ENCODE measurements at regions of chr11 and their contacts with region 1.

Region 1: GRCh38 chr11:1515082-1516060 is 28.8 kb upstream of the MOB2 start:
- DNase-seq: peak; percentile 49 to 99
- H3K4me3 ChIP-seq: no peak overlapping the region
- H3K27ac ChIP-seq: no peak overlapping the region
- H3K4me1 ChIP-seq: peaks cover 0 to 9% (median 8%) of the 10 kb centered on the region in 4 experiments; a peak in 6 of 7 replicates
- H3K27me3 ChIP-seq: no peaks in the 10 kb centered on the region
- CTCF ChIP-seq: peak; percentile 91 to 98 (median 92)
- EP300 ChIP-seq: no peak
- POLR2A ChIP-seq: no peak
- RAD21 ChIP-seq: peak; percentile 91 to 92

Region 2: DNA sequence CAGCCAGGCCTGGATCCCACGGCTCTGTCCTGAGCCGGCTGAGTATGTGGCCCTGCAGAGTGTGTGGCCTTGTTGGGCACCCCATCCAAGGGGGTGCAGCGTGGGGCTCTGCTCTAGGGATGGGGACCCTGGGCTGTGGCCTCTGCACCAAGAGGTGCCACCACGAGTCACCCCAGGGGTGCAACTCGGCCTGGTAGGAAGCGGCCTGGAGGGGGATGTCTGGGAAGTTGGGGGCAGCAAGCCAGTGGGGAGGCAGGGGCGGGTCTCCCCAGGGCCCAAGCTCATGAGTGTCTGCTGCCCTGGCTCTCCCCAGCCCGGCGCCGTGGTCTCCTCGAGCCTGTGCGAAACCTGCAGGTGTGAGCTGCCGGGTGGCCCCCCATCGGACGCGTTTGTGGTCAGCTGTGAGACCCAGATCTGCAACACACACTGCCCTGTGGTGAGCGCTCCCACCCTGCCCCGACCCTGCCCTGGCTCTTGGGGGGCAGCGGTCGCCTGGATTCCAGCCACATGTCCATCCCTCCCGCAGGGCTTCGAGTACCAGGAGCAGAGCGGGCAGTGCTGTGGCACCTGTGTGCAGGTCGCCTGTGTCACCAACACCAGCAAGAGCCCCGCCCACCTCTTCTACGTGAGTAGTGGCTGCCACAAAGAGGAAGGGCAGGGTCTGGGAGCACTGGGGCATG is 316.7 kb before region 1 on chr11:
- CTCF ChIA-PET with region 1: no interaction called
- POLR2A ChIA-PET with region 1: no interaction called
- DNase-seq: no peak
- H3K4me3 ChIP-seq: no peak overlapping the region
- H3K27ac ChIP-seq: no peak overlapping the region
- H3K4me1 ChIP-seq: no peaks in the 10 kb centered on the region; a peak in 1 of 7 replicates
- H3K27me3 ChIP-seq: peaks cover 0 to 2% (median 0%) of the 10 kb centered on the region in 4 experiments; a peak in 1 of 7 replicates
- CTCF ChIP-seq: no peak
- EP300 ChIP-seq: no peak
- POLR2A ChIP-seq: no peak
- RAD21 ChIP-seq: no peak

Region 3: GRCh38 chr11:1303126-1303821 is 212.1 kb before region 1 on chr11:
- CTCF ChIA-PET with region 1: interaction called, 11 read pairs
- POLR2A ChIA-PET with region 1: no interaction called
- DNase-seq: peak in 1 of 2 experiments; percentile 83
- H3K4me3 ChIP-seq: no peak overlapping the region
- H3K27ac ChIP-seq: no peak overlapping the region
- H3K4me1 ChIP-seq: peaks cover 0 to 9% (median 0%) of the 10 kb centered on the region in 4 experiments; a peak in 3 of 7 replicates
- H3K27me3 ChIP-seq: no peaks in the 10 kb centered on the region
- CTCF ChIP-seq: peak; percentile 55 to 81 (median 79)
- EP300 ChIP-seq: no peak
- POLR2A ChIP-seq: no peak
- RAD21 ChIP-seq: peak; percentile 44 to 55; a peak in 3 of 4 replicates

Region 4: DNA sequence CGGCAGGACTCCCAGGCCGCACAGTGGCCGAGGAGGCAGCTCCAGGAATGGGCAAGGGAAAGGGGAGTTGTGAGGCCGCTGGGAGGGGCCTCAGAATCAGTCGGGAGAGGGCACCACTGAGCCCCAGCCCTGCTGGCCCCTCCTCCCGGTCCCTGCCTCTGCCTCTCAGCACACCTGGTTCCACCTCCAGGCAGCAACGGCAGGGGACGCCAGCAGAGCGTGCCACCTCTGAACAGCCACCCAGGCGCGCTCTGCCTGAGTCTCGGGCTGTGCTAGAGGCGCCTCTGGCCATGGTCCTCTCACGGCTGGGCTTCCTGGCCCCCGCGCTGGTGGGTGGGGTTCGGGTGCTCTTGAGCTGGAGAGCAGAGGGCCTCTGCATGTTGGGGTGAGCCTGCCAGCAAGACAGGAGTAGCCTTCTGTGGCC is 61.7 kb before region 1 on chr11:
- CTCF ChIA-PET with region 1: interaction called, 17 read pairs
- POLR2A ChIA-PET with region 1: no interaction called
- DNase-seq: peak; percentile 17 to 74
- H3K4me3 ChIP-seq: no peak overlapping the region
- H3K27ac ChIP-seq: no peak overlapping the region
- H3K4me1 ChIP-seq: peaks cover 0 to 5% (median under 1%) of the 10 kb centered on the region in 4 experiments; a peak in 1 of 7 replicates
- H3K27me3 ChIP-seq: no peaks in the 10 kb centered on the region
- CTCF ChIP-seq: peak in 2 of 3 experiments; percentile 51 to 56; a peak in 3 of 4 replicates
- EP300 ChIP-seq: no peak
- POLR2A ChIP-seq: no peak
- RAD21 ChIP-seq: peak; percentile 33 to 51

Region 5: DNA sequence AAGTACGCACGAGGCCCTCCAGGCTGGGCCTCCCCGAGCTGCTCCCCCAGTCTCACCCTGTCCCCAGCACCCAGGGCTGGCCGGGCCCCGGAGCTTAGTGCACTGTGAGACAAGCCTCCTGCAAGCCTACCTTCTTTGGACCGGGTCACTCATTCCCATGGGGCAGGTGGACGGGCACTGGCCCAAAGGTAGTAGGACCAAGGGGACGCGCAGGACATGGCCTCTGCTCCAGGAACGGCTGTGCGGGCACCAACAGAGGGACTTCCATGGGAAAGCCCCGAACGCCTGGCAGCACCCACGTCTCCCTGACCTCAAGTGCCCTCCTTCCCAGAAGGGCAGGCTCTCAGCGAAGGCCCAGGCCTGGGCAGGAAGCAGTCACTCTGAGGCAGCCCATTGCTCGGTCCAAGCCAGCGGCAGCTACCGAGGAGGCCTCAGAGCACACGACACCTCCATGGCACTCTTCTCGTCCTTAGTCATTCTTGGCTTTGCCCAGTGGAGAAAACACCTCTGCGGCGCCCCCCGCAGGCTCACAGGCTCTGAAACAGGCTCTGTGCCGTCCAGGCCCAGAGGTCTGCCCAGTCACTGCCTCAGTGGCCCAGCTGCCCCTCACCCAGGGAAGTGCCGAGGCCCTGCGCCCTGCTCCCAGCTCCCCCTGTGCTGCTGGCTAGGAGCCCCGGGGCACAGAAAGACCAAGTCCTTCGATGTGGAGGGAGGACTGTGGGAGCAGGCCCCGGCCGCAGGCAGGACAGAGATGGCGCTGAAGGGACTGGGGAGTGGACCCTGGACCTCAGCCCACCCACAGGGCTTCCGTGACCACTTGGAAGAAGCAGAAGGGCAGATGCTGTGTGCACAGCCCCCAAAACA is 32.6 kb before region 1 on chr11:
- CTCF ChIA-PET with region 1: interaction called, 12 read pairs
- POLR2A ChIA-PET with region 1: no interaction called
- DNase-seq: no peak
- H3K4me3 ChIP-seq: no peak overlapping the region
- H3K27ac ChIP-seq: no peak overlapping the region
- H3K4me1 ChIP-seq: peaks cover 0 to 5% (median under 1%) of the 10 kb centered on the region in 4 experiments; a peak in 2 of 7 replicates
- H3K27me3 ChIP-seq: no peaks in the 10 kb centered on the region
- CTCF ChIP-seq: peak in 2 of 3 experiments; percentile 46 to 51; a peak in 2 of 4 replicates
- EP300 ChIP-seq: no peak
- POLR2A ChIP-seq: no peak
- RAD21 ChIP-seq: peak; percentile 32 to 43; a peak in 3 of 4 replicates

Region 6: DNA sequence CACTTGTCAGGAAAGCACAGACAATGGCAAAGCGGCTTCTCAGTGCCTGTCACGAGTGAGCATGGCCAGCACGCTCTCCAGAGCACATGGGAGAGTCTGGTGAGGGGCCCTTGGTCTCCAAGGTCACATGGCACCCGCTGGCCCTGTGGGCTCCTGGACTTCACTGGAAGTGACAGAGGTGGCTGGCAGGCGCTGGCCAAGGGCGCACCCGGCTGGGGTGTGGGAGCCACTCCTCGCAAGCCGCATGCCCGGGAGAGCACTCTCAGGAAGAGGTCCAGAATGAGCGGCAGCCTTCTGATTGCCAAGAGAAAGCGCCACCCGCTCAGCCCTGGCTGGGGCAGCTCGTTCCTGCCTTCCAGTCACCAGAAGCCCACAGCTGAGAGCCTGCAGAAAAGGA is 11.7 kb before region 1 on chr11:
- CTCF ChIA-PET with region 1: interaction called, 13 read pairs
- POLR2A ChIA-PET with region 1: interaction called, 3 read pairs
- DNase-seq: no peak
- H3K4me3 ChIP-seq: no peak overlapping the region
- H3K27ac ChIP-seq: no peak overlapping the region
- H3K4me1 ChIP-seq: peaks cover 0 to 18% (median 9%) of the 10 kb centered on the region in 4 experiments; a peak in 3 of 7 replicates
- H3K27me3 ChIP-seq: no peaks in the 10 kb centered on the region
- CTCF ChIP-seq: no peak
- EP300 ChIP-seq: no peak
- POLR2A ChIP-seq: no peak
- RAD21 ChIP-seq: no peak

Region 7: DNA sequence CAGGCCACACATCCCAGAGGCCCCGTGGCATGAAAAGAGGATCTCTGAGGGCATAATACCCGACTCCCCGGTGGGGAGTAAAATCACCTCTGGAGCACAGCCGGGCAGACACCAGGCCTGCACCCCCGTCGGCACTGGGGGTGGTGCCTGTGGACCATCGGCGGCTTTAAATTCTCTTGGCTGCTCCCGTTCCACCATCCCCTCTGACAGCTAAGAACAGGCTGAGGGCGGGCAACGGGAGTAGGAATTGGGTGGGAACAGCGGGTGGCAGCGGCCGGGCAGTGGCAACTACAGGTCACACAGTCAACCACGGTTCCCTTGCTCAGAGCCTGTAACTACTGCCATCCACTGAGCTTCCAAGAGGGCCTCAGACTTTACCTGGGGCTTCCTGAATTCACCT is 11.4 kb after region 1 on chr11:
- CTCF ChIA-PET with region 1: interaction called, 21 read pairs
- POLR2A ChIA-PET with region 1: no interaction called
- DNase-seq: no peak
- H3K4me3 ChIP-seq: no peak overlapping the region
- H3K27ac ChIP-seq: no peak overlapping the region
- H3K4me1 ChIP-seq: peaks cover 0 to 2% (median 0%) of the 10 kb centered on the region in 4 experiments; a peak in 1 of 7 replicates
- H3K27me3 ChIP-seq: no peaks in the 10 kb centered on the region
- CTCF ChIP-seq: no peak
- EP300 ChIP-seq: no peak
- POLR2A ChIP-seq: no peak
- RAD21 ChIP-seq: no peak